ENCODE measurements at regions of chr6 and their contacts with region 1.

Region 1: GRCh38 chr6:83221889-83222479 is 28.8 kb downstream of the RWDD2A start:
- DNase-seq: no peak
- H3K4me3 ChIP-seq: no peak overlapping the region
- H3K27ac ChIP-seq: no peak overlapping the region
- H3K4me1 ChIP-seq: no peaks in the 10 kb centered on the region
- H3K27me3 ChIP-seq: no peaks in the 10 kb centered on the region
- CTCF ChIP-seq: peak in 1 of 3 experiments; percentile 28; a peak in 2 of 4 replicates
- EP300 ChIP-seq: no peak
- POLR2A ChIP-seq: no peak
- RAD21 ChIP-seq: peak in 1 of 2 experiments; percentile 71; a peak in 3 of 4 replicates

Region 2: GRCh38 chr6:83514866-83515466 is 293.0 kb after region 1 on chr6:
- CTCF ChIA-PET with region 1: interaction called, 310 read pairs
- POLR2A ChIA-PET with region 1: interaction called, 3 read pairs
- DNase-seq: no peak
- H3K4me3 ChIP-seq: no peak overlapping the region
- H3K27ac ChIP-seq: no peak overlapping the region
- H3K4me1 ChIP-seq: peaks cover 0 to 4% (median 0%) of the 10 kb centered on the region in 4 experiments; a peak in 3 of 7 replicates
- H3K27me3 ChIP-seq: no peaks in the 10 kb centered on the region
- CTCF ChIP-seq: peak in 2 of 3 experiments; percentile 69; a peak in 3 of 4 replicates
- EP300 ChIP-seq: no peak
- POLR2A ChIP-seq: no peak
- RAD21 ChIP-seq: peak; percentile 92

Measured in H1 (cell line).